Heart left ventricle (tissue), 16 donors: ENCODE measurements at regions of chr20 and their contacts with region 1.

Region 1: DNA sequence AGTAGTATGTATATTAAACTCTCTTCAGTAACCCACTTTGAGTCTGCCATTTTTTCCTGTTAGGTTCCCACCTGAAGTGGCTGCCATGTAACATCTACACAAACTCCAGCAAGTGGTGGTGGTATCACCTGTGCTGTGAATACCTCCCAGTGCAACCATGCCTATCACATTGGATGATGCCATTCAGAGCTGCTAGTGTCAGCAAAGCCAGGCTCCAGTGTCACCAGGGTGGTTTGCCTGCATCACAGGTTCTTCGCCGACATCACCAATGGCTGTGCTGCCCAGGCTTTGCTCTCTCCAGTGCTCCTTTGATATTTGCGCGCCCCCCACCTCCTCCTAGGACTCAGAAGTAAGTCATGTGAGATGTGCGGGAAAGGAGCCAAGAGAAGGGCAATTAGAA is 162.6 kb upstream of the FOXA2 start:
- DNase-seq: no peak
- ATAC-seq: no peak
- H3K4me3 ChIP-seq: no peak overlapping the region
- H3K27ac ChIP-seq: no peak overlapping the region
- H3K4me1 ChIP-seq: no peaks in the 10 kb centered on the region
- H3K27me3 ChIP-seq: no peaks in the 10 kb centered on the region
- CTCF ChIP-seq: no peak
- POLR2A ChIP-seq: no peak

Region 2: DNA sequence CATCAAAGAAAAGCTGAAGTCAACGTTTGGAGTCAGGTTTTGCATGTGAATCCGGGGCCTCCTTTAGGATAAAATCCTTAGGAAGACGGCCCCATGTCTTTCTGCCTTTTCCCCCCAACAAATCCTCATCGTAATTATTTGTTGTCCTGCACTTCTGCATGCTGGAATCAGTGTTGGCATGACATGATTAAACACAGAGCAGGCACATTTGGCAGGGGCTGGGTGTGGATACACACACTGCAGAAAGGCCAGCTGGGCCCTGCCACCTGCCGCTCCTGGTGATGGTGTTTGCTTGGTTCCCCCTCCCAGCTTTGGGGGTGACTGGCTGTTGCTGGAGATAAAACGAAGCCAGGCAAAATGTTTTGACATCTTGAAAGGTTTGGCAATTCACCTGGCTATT is 116.3 kb before region 1 on chr20:
- intact Hi-C with region 1: no loop called
- DNase-seq: no peak
- ATAC-seq: no peak
- H3K4me3 ChIP-seq: no peak overlapping the region
- H3K27ac ChIP-seq: no peak overlapping the region
- H3K4me1 ChIP-seq: no peaks in the 10 kb centered on the region
- H3K27me3 ChIP-seq: peaks cover 0 to 19% (median 0%) of the 10 kb centered on the region in 9 donors
- CTCF ChIP-seq: no peak
- POLR2A ChIP-seq: no peak

Region 3: GRCh38 chr20:22680031-22680739 is 66.8 kb before region 1 on chr20:
- intact Hi-C with region 1: no loop called
- DNase-seq: no peak
- ATAC-seq: no peak
- H3K4me3 ChIP-seq: no peak overlapping the region
- H3K27ac ChIP-seq: no peak overlapping the region
- H3K4me1 ChIP-seq: peaks cover 0 to 10% (median 4%) of the 10 kb centered on the region in 12 donors
- H3K27me3 ChIP-seq: peaks cover 0 to 46% (median 6%) of the 10 kb centered on the region in 9 donors
- CTCF ChIP-seq: no peak
- POLR2A ChIP-seq: no peak

Region 4: GRCh38 chr20:22732753-22733152 is 14.2 kb before region 1 on chr20:
- intact Hi-C with region 1: no loop called
- DNase-seq: no peak
- ATAC-seq: no peak
- H3K4me3 ChIP-seq: no peak overlapping the region
- H3K27ac ChIP-seq: no peak overlapping the region
- H3K4me1 ChIP-seq: no peaks in the 10 kb centered on the region
- H3K27me3 ChIP-seq: no peaks in the 10 kb centered on the region
- CTCF ChIP-seq: no peak
- POLR2A ChIP-seq: no peak

Region 5: GRCh38 chr20:22767516-22767915 is 20.6 kb after region 1 on chr20:
- intact Hi-C with region 1: loop called in 1 of 10 experiments (anchors 2 kb)
- DNase-seq: no peak
- ATAC-seq: no peak
- H3K4me3 ChIP-seq: no peak overlapping the region
- H3K27ac ChIP-seq: no peak overlapping the region
- H3K4me1 ChIP-seq: peaks cover 0 to 25% (median 12%) of the 10 kb centered on the region in 12 donors
- H3K27me3 ChIP-seq: no peaks in the 10 kb centered on the region
- CTCF ChIP-seq: no peak
- POLR2A ChIP-seq: no peak